ENCODE measurements at regions of chr7 and their contacts with region 1.

Region 1: GRCh38 chr7:74429153-74429747 is 24.5 kb upstream of the GTF2IRD1 start:
- DNase-seq: no peak
- H3K4me3 ChIP-seq: no peak overlapping the region
- H3K27ac ChIP-seq: no peak overlapping the region
- H3K4me1 ChIP-seq: peaks cover 0 to 8% (median 0%) of the 10 kb centered on the region in 4 donors
- H3K27me3 ChIP-seq: no peaks in the 10 kb centered on the region
- CTCF ChIP-seq: no peak
- EP300 ChIP-seq: no peak
- POLR2A ChIP-seq: no peak

Region 2: GRCh38 chr7:74371381-74372341 is 57.6 kb before region 1 on chr7:
- intact Hi-C with region 1: no loop called
- DNase-seq: peak; percentile 66 to 77
- H3K4me3 ChIP-seq: peak overlapping the region; percentile 13 to 26 (median 18)
- H3K27ac ChIP-seq: peak overlapping the region; percentile 17 to 81 (median 66)
- H3K4me1 ChIP-seq: peaks cover 15 to 35% (median 24%) of the 10 kb centered on the region in 4 donors
- H3K27me3 ChIP-seq: no peaks in the 10 kb centered on the region
- CTCF ChIP-seq: no peak
- EP300 ChIP-seq: no peak
- POLR2A ChIP-seq: no peak

Region 3: GRCh38 chr7:74544706-74545469 is 115.6 kb after region 1 on chr7:
- intact Hi-C with region 1: loop called (anchors 10 kb)
- DNase-seq: peak; percentile 68
- H3K4me3 ChIP-seq: no peak overlapping the region
- H3K27ac ChIP-seq: peak overlapping the region; percentile 56 to 73 (median 66)
- H3K4me1 ChIP-seq: peaks cover 0 to 23% (median 9%) of the 10 kb centered on the region in 4 donors
- H3K27me3 ChIP-seq: no peaks in the 10 kb centered on the region
- CTCF ChIP-seq: peak in 5 of 7 experiments; percentile 45 to 76 (median 52)
- EP300 ChIP-seq: no peak
- POLR2A ChIP-seq: no peak

Measured in stomach (tissue), 19 donors.